CD4-positive, alpha-beta T cell (primary cell): ENCODE measurements at regions of chr3 and their contacts with region 1.

Region 1: DNA sequence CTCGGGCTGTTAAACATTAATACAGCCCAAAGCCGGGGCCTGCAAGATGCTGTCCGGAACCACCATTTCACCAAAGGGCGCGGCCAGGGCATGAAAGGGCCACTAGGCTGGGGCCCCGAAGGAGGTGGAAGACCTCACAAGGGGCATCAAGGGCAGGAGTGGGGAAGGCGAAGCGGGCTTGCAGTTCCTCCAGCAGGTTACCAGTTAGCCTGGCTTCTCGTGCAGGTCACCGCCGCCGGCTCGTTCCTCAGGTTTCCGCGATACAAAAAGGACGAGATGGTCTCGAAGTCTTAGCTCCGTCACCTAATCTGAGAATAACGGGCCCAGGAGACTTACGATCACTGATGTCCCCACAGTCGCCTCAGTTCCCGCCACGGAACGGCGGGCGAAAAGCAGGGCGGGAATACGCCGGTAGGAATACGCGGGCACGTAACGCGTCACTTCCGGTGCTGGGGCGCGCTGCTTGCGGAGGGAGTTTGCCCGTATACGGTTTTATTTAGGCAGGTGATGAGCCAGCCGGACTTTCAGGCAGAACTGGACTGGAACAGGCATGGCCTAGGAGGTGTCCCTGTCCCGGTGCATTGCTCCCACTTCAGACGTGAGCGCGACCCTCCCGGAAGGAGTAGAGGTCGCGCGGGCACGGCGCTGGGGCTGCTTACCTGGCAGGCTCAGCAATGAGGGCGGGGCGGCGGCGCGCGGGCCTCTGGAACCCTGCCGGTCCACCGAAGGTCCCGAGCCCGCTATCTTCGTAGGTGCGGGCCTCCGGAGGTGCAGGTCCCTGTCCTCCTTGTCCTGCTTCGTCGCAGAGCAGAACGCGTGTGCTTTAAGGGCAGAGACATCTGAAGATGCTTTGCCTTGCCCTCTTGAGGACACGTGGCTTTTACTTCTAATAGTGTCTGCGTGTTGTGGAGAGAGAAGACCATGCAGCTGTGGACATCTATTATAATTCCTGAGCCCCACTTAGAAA is at the start of gene RFC4:
- DNase-seq: peak; percentile 67 to 90 (median 82)
- ATAC-seq: peak; percentile 88
- H3K4me3 ChIP-seq: peak within 1 kb of the TSS; percentile 83
- H3K4me3 Mint-ChIP-seq: peak within 1 kb of the TSS; percentile 98
- H3K27ac ChIP-seq: peak within 1 kb of the TSS; percentile 73 to 92
- H3K27ac Mint-ChIP-seq: peak within 1 kb of the TSS; percentile 98
- H3K4me1 ChIP-seq: peaks cover 25% of the 10 kb centered on the region
- H3K4me1 Mint-ChIP-seq: peaks cover 27% of the 10 kb centered on the region
- H3K27me3 ChIP-seq: no peaks in the 10 kb centered on the region
- H3K27me3 Mint-ChIP-seq: no peaks in the 10 kb centered on the region
- CTCF ChIP-seq: no peak
- total RNA-seq, gene RFC4: 8.6 to 12.6 TPM

Region 2: GRCh38 chr3:186570096-186570940 is 236.1 kb before region 1 on chr3 and contains the start of gene DNAJB11:
- CTCF ChIA-PET with region 1: no interaction called
- POLR2A ChIA-PET with region 1: interaction called, 3 read pairs
- intact Hi-C with region 1: loop called (anchors 5 kb)
- DNase-seq: peak; percentile 91 to 100 (median 97)
- ATAC-seq: peak; percentile 83
- H3K4me3 ChIP-seq: peak within 1 kb of the TSS; percentile 79
- H3K4me3 Mint-ChIP-seq: peak within 1 kb of the TSS; percentile 99
- H3K27ac ChIP-seq: peak within 1 kb of the TSS; percentile 90 to 94
- H3K27ac Mint-ChIP-seq: peak within 1 kb of the TSS; percentile 94
- H3K4me1 ChIP-seq: peaks cover 37% of the 10 kb centered on the region
- H3K4me1 Mint-ChIP-seq: peaks cover 69% of the 10 kb centered on the region
- H3K27me3 ChIP-seq: no peaks in the 10 kb centered on the region
- H3K27me3 Mint-ChIP-seq: no peaks in the 10 kb centered on the region
- CTCF ChIP-seq: no peak
- total RNA-seq, gene DNAJB11: 69.3 to 70.3 TPM

Region 3: DNA sequence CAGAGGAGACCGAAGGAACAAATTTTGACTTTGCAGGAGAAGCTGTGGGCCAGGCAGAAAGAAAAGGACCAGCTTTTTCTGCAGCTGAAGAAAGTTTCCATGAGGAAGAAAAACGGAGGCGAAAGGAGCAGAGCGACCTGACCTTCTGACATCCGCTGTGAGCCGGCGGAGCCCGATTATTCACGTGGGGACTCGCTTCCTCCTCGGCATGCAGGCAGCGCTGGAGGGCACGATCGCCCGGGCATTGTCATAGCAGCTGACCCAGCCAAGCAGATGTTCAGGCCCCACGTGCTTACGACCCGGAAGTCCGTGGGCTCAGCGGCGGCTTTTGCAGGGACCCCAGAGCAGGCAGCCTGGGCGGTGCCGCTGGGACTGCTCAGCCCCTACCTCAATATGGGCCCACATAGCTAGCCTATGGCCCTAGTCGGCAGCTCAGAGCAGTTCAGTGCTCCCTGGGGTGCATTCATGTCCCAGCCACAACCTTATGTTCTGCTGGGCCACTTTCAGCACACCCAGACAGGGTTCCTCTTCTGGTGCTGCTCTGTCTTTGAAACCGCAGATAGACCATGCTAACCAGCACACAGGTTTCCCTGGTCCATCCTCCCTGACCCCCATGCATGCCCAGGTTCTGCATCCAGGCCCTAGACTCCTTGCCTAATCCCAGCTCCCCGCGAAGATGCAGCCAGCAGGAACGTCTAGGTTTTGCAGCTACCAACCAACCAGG is 33.5 kb before region 1 on chr3:
- CTCF ChIA-PET with region 1: no interaction called
- POLR2A ChIA-PET with region 1: interaction called, 10 read pairs
- intact Hi-C with region 1: no loop called
- DNase-seq: peak; percentile 27 to 77 (median 52)
- ATAC-seq: peak; percentile 87
- H3K4me3 ChIP-seq: peak overlapping the region; percentile 82
- H3K4me3 Mint-ChIP-seq: peak overlapping the region; percentile 97
- H3K27ac ChIP-seq: peak overlapping the region; percentile 67 to 77
- H3K27ac Mint-ChIP-seq: peak overlapping the region; percentile 80
- H3K4me1 ChIP-seq: peaks cover 16% of the 10 kb centered on the region
- H3K4me1 Mint-ChIP-seq: peaks cover 19% of the 10 kb centered on the region
- H3K27me3 ChIP-seq: no peaks in the 10 kb centered on the region
- H3K27me3 Mint-ChIP-seq: no peaks in the 10 kb centered on the region
- CTCF ChIP-seq: no peak

Region 4: DNA sequence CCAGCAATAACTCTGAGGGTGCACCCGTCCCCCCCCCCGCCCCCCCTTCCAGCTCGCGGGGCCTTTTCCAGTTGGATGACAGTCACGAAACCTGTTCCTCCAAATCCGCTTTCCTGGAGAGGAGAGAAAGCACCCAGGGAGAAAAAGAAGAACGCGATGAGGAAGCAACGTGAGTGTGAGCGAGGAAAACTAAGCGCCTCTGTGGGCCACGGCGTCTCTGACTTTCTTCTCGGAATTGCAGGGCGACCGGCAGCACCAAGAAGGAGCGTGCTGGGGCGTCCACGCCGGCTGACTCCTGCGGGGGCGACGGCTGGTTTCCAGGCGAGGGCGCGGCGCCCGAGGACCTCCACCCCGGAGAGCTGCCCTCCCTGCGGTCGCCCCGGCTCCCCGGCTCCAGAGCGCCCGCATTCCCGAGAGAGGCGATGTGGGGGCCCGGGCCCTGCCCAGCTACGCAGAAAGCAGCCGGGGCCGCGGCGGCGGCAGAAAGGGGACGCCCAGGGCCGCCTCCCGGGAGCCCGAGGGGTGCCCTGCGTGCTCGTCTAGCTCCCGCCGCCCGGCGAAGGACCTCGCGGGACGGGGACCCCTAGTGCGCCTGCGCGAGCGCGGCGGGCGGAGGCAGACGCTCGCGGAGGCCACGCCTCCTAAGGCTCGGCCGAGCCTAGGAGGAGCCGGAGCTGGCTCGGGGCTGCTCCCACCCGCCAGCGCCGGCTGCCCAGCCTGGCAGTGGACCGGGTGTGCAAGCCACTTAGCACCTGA is 20.8 kb after region 1 on chr3:
- CTCF ChIA-PET with region 1: interaction called, 4 read pairs
- POLR2A ChIA-PET with region 1: interaction called, 5 read pairs
- intact Hi-C with region 1: loop called (anchors 2 kb)
- DNase-seq: peak; percentile 68 to 96 (median 82)
- ATAC-seq: peak; percentile 92
- H3K4me3 ChIP-seq: peak overlapping the region; percentile 60
- H3K4me3 Mint-ChIP-seq: peak overlapping the region; percentile 76
- H3K27ac ChIP-seq: no peak overlapping the region
- H3K27ac Mint-ChIP-seq: no peak overlapping the region
- H3K4me1 ChIP-seq: peaks cover 27% of the 10 kb centered on the region
- H3K4me1 Mint-ChIP-seq: peaks cover 23% of the 10 kb centered on the region
- H3K27me3 ChIP-seq: peaks cover 37 to 65% of the 10 kb centered on the region in 2 experiments
- H3K27me3 Mint-ChIP-seq: peaks cover 65% of the 10 kb centered on the region
- CTCF ChIP-seq: no peak

Region 5: GRCh38 chr3:188111002-188111584 is 1304.7 kb after region 1 on chr3:
- CTCF ChIA-PET with region 1: no interaction called
- POLR2A ChIA-PET with region 1: no interaction called
- intact Hi-C with region 1: no loop called
- DNase-seq: no peak
- ATAC-seq: no peak
- H3K4me3 ChIP-seq: no peak overlapping the region
- H3K4me3 Mint-ChIP-seq: no peak overlapping the region
- H3K27ac ChIP-seq: no peak overlapping the region
- H3K27ac Mint-ChIP-seq: no peak overlapping the region
- H3K4me1 ChIP-seq: no peaks in the 10 kb centered on the region
- H3K4me1 Mint-ChIP-seq: no peaks in the 10 kb centered on the region
- H3K27me3 ChIP-seq: no peaks in the 10 kb centered on the region
- H3K27me3 Mint-ChIP-seq: no peaks in the 10 kb centered on the region
- CTCF ChIP-seq: no peak